H1 (cell line): ENCODE measurements at regions of chr12 and their contacts with region 1.

Region 1: DNA sequence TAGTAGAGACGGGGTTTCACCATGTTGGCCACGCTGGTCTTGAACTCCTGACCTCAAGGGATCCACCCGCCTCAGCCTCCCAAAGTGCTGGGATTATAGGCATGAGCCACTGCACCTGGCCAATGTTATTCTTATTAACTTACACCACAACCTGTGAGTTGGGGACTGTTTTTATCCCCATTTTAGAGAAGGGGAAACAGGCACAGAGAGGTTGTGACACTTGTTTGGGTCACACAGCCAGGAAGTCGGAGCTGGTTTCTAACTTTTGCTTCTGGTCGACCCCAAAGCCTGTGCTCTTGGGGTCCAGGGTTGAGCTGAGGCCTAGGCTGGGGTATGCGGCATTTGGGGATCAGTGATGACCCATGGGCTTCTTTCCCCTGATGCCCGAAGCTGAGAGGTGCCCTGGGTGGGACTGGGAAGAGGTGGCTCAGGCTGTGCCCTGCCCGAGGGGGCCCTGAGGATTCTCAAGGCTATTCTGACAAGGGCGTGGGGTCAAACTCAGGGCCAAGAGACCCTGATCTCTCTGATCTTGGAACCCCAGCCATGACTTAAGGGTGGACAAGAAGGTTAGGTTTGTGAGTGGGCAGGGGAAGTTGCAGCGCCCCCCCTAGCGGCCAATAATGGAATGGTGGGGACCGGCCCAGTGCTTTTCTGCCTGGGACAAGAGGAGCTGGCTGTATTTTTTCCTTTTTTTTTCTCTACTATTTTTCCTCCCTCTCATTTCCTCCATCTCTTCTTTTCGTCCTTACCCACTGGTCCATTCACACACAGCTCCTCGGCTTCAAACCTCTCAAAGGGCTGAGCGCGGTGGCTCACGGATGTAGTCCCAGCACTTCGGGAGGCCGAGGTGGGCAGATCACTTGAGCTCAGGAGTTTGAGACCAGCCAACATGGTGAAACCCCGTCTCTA is 3.0 kb downstream of the SDSL start:
- DNase-seq: peak; percentile 38 to 94
- H3K4me3 ChIP-seq: peak overlapping the region in 1 of 4 experiments; percentile 52; a peak in 2 of 8 replicates
- H3K27ac ChIP-seq: peak overlapping the region; percentile 50; the same call in 1 of the 2 replicates
- H3K4me1 ChIP-seq: peaks cover 0 to 7% (median 5%) of the 10 kb centered on the region in 4 experiments; a peak in 5 of 7 replicates
- H3K27me3 ChIP-seq: no peaks in the 10 kb centered on the region
- CTCF ChIP-seq: peak; percentile 74 to 85 (median 81)
- EP300 ChIP-seq: no peak
- POLR2A ChIP-seq: no peak
- RAD21 ChIP-seq: peak; percentile 73 to 76

Region 2: DNA sequence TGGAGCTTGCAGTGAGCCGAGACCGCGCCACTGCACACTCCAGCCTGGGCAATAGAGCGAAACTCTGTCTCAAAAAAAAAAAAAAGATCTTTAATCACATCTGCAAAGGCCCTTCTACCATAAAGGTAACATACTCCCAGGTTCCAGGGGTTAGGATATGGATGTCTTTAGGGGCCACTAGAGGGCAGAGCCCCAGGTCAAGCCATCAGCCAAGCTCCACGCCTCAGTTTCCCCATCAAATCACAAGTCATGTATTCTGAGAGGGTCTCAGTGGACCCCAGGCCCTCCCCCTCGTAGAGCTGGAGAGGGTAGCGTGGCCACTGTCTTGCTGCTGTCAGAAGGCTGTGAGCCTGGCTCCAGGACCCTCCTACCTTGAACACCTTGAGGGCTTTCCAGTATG is 109.0 kb before region 1 on chr12:
- CTCF ChIA-PET with region 1: interaction called, 20 read pairs
- POLR2A ChIA-PET with region 1: no interaction called
- DNase-seq: no peak
- H3K4me3 ChIP-seq: no peak overlapping the region
- H3K27ac ChIP-seq: no peak overlapping the region
- H3K4me1 ChIP-seq: peaks cover 0 to 3% (median 0%) of the 10 kb centered on the region in 4 experiments; a peak in 2 of 7 replicates
- H3K27me3 ChIP-seq: no peaks in the 10 kb centered on the region; a peak in 1 of 7 replicates
- CTCF ChIP-seq: peak; percentile 21 to 40 (median 26); a peak in 3 of 4 replicates
- EP300 ChIP-seq: no peak
- POLR2A ChIP-seq: no peak
- RAD21 ChIP-seq: peak; percentile 8 to 23; a peak in 1 of 4 replicates

Region 3: DNA sequence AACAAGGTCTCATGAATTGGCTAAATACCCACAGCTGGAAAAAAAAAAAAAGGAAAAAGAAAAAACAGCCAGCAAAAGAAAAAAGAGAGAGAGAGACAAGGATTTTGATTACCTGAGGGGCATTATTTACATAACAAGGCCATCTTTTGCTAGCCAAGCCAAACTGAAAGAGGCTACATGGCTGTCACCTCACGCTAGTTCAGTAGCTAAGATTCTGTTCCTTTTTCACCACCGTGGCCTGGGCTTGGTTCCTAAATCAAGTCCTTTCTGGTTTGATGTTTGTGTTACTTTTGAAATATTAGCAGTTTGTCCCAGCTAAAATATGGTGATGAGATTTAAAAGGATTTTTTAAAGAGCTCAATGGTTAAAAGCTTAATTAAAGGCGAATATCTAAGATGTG is 19.5 kb before region 1 on chr12:
- CTCF ChIA-PET with region 1: interaction called, 53 read pairs
- POLR2A ChIA-PET with region 1: interaction called, 4 read pairs
- DNase-seq: no peak
- H3K4me3 ChIP-seq: no peak overlapping the region
- H3K27ac ChIP-seq: no peak overlapping the region
- H3K4me1 ChIP-seq: peaks cover 0 to 6% (median 3%) of the 10 kb centered on the region in 4 experiments; a peak in 4 of 7 replicates
- H3K27me3 ChIP-seq: no peaks in the 10 kb centered on the region
- CTCF ChIP-seq: no peak
- EP300 ChIP-seq: no peak
- POLR2A ChIP-seq: no peak
- RAD21 ChIP-seq: no peak

Region 4: GRCh38 chr12:113413488-113413939 is 11.7 kb before region 1 on chr12:
- CTCF ChIA-PET with region 1: interaction called, 53 read pairs
- POLR2A ChIA-PET with region 1: interaction called, 5 read pairs
- DNase-seq: no peak
- H3K4me3 ChIP-seq: no peak overlapping the region
- H3K27ac ChIP-seq: no peak overlapping the region
- H3K4me1 ChIP-seq: no peaks in the 10 kb centered on the region
- H3K27me3 ChIP-seq: no peaks in the 10 kb centered on the region
- CTCF ChIP-seq: no peak
- EP300 ChIP-seq: no peak
- POLR2A ChIP-seq: no peak
- RAD21 ChIP-seq: no peak

Region 5: GRCh38 chr12:113439606-113440030 is 14.4 kb after region 1 on chr12:
- CTCF ChIA-PET with region 1: interaction called, 26 read pairs
- POLR2A ChIA-PET with region 1: interaction called, 5 read pairs
- DNase-seq: peak in 1 of 2 experiments; percentile 89
- H3K4me3 ChIP-seq: no peak overlapping the region
- H3K27ac ChIP-seq: no peak overlapping the region
- H3K4me1 ChIP-seq: peaks cover 0 to 2% (median under 1%) of the 10 kb centered on the region in 4 experiments; a peak in 2 of 7 replicates
- H3K27me3 ChIP-seq: peaks cover 0 to 2% (median 0%) of the 10 kb centered on the region in 4 experiments; a peak in 1 of 7 replicates
- CTCF ChIP-seq: peak; percentile 70 to 91 (median 88)
- EP300 ChIP-seq: no peak
- POLR2A ChIP-seq: no peak
- RAD21 ChIP-seq: peak; percentile 95

Region 6: DNA sequence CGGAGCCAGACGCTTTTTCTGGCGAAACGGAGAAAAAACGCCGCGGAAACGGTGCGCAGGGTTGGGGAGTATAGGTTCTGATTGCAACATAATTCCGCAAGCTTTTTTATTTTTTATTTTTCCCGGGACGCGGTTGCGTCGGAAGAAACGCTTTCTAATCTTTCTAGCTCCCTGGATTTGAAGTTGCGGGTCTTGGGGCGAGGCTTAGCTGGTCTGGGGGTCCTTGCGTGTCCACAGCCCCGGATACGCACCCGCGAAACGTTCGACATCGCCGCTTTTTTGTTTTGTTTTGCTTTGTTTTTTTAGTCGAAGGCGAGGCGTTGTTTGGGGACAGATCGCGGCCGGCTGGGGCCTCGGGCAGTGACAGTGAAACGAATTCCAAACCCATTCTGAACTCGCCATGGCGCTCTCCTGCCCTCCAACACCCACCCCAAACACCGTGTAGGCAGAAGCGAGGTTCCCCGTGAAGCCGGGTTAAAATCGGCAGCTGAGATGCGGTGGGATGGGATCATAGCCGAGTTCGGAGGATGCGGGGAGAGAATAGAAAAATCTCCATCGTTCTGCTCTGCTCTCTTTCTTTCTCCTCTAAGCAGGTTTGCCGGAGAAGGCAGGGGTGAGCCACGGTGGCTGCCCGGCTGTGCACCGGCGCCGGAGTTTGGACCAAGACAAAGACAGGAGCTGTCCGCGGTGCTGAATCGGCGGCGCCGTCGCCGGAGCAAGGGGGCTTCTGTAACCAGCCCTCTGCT is 54.6 kb after region 1 on chr12:
- CTCF ChIA-PET with region 1: no interaction called
- POLR2A ChIA-PET with region 1: no interaction called
- DNase-seq: peak in 1 of 2 experiments; percentile 96
- H3K4me3 ChIP-seq: peak overlapping the region; percentile 33 to 57 (median 50); a peak in 7 of 8 replicates
- H3K27ac ChIP-seq: no peak overlapping the region
- H3K4me1 ChIP-seq: peaks cover 14 to 44% (median 21%) of the 10 kb centered on the region in 4 experiments
- H3K27me3 ChIP-seq: peaks cover 46 to 69% (median 64%) of the 10 kb centered on the region in 4 experiments
- CTCF ChIP-seq: no peak
- EP300 ChIP-seq: peak in 1 of 2 experiments; percentile 79; a peak in 1 of 3 replicates
- POLR2A ChIP-seq: no peak
- RAD21 ChIP-seq: peak; percentile 1 to 36; a peak in 2 of 4 replicates